ENCODE measurements at regions of chr16 and their contacts with region 1.

Region 1: DNA sequence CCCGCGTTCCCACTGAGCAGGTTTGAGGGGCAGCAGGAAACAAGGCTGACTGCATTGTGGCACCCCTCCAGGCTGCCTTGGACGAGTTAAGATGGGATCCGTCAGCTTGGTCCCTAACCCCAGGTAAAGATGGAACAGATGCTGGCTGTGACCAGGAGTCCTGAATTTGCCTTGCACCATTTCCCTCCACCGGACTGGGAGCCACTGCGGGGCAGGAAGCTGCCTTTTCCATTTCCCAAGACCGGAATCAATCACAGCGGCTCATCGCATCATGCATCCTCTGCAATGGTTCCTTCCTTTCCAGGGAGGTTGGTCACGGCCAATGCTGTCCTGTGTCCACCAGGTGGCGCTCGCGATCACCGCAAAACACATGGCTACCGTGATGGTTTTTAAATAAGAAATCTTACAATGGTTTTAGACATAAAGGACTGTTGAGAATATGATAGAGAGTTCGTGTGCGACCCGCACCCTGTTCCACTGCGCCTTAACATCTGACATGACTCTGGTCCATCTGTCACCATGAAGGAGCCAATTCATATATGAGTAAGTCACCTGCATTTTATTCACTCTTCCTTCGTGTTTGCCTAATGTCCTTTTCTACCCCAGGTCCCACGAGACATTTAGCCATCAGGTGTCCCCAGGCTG is 6.8 kb upstream of the MEAK7 start:
- DNase-seq: peak; percentile 86
- H3K4me3 Mint-ChIP-seq: no peak overlapping the region
- H3K27ac Mint-ChIP-seq: no peak overlapping the region
- H3K4me1 Mint-ChIP-seq: no peaks in the 10 kb centered on the region
- H3K27me3 Mint-ChIP-seq: no peaks in the 10 kb centered on the region
- CTCF ChIP-seq: peak; percentile 87

Region 2: GRCh38 chr16:84625556-84625955 is 114.3 kb after region 1 on chr16:
- CTCF ChIA-PET with region 1: interaction called, 56 read pairs
- POLR2A ChIA-PET with region 1: interaction called, 4 read pairs
- intact Hi-C with region 1: loop called (anchors 1 kb)
- DNase-seq: no peak
- H3K4me3 Mint-ChIP-seq: no peak overlapping the region
- H3K27ac Mint-ChIP-seq: no peak overlapping the region
- H3K4me1 Mint-ChIP-seq: no peaks in the 10 kb centered on the region
- H3K27me3 Mint-ChIP-seq: no peaks in the 10 kb centered on the region
- CTCF ChIP-seq: no peak